HepG2 (cell line): ENCODE measurements at regions of chr12 and their contacts with region 1.

Region 1: DNA sequence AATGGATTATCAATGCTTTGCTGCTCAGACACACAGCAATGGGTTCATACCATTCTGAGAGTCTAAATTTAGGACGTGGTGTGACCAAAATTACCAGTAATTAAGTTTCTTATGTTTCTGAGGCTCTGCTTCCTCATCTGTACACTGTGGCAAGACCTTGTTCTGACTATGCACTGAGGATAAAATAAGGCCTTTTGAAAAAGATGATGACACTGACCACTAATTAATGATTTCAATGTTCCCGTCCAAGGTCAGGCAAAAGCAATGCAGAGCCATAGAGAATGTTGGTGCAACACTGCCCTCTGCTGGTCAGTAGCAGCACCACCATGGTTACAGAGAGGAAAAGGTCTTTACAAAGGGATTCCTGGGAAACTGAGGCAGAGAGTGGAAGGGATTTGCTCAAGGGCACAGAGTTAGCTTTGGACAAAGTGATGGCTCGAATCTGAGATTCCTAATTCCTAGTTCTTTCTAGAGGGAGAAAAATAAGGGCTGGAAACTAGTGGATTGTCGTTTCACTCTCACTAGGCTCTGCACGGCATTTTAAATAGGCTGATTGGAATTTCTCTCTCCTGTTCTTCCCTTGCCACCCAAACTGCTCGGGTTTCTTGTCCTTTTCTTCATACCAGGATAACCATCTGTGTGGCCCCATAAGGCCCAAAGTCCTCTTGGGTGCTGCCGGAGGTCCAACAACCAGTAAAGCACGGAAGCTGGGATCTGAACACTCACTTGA is 22.3 kb upstream of the P2RX7 start:
- DNase-seq: peak; percentile 60
- ATAC-seq: peak; percentile 69
- H3K4me3 ChIP-seq: no peak overlapping the region
- H3K27ac ChIP-seq: no peak overlapping the region
- H3K4me1 ChIP-seq: peaks cover 20% of the 10 kb centered on the region
- H3K27me3 ChIP-seq: peaks cover 3 to 14% of the 10 kb centered on the region in 2 experiments; a peak in 3 of 5 replicates
- CTCF ChIP-seq: peak; percentile 94
- EP300 ChIP-seq: no peak
- POLR2A ChIP-seq: no peak
- RAD21 ChIP-seq: peak; percentile 72

Region 2: GRCh38 chr12:121209624-121210572 is 99.5 kb after region 1 on chr12 and contains the start of gene P2RX4:
- CTCF ChIA-PET with region 1: no interaction called
- POLR2A ChIA-PET with region 1: no interaction called
- in situ Hi-C with region 1: no loop called
- intact Hi-C with region 1: loop called (anchors 10 kb)
- DNase-seq: peak; percentile 64
- ATAC-seq: peak; percentile 97
- H3K4me3 ChIP-seq: peak within 1 kb of the TSS; percentile 76 to 87 (median 77)
- H3K27ac ChIP-seq: peak within 1 kb of the TSS; percentile 60
- H3K4me1 ChIP-seq: peaks cover 23% of the 10 kb centered on the region
- H3K27me3 ChIP-seq: no peaks in the 10 kb centered on the region
- CTCF ChIP-seq: peak; percentile 81
- EP300 ChIP-seq: no peak
- POLR2A ChIP-seq: peak; percentile 93 to 97
- RAD21 ChIP-seq: 0 out of 2 replicates have a peak, but pooled peaks have one; percentile 30
- total RNA-seq, gene P2RX4: 9.5 and 13.8 TPM in 2 replicates

Region 3: DNA sequence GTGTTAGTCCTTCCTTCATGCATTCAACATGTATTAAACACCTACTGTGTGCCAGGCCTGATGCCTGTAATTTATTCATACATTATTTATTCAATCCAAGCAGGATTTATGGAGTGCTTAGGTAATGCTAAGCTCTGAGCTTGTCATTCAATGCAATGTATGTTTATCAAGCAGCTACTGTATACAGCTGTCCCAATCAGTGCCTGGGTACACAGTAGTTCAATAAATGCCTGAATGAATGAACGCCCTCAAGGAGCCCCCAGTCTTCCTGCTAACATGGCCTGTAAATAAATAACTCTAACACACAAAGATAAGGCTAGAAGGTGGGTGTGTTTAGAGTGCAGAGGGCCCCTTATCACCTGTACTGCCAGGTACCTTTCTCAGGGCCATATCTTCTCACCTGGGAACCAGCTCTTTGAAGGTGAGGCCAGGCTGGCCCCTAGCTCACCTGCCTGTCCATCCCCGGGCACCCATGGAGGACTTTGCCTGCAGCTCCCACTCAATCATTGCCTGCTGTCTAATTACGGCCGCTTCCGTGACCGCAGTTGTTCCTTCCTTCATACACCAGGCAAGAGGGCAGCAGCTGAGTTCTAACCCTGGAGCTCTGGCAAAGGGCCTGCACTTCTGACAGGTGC is 490.4 kb after region 1 on chr12:
- CTCF ChIA-PET with region 1: no interaction called
- POLR2A ChIA-PET with region 1: no interaction called
- in situ Hi-C with region 1: no loop called
- intact Hi-C with region 1: no loop called
- DNase-seq: no peak
- ATAC-seq: peak; percentile 26; the same call in 1 of the 3 replicates
- H3K4me3 ChIP-seq: no peak overlapping the region; a peak in 1 of 6 replicates
- H3K27ac ChIP-seq: no peak overlapping the region
- H3K4me1 ChIP-seq: peaks cover 34% of the 10 kb centered on the region
- H3K27me3 ChIP-seq: no peaks in the 10 kb centered on the region; a peak in 1 of 5 replicates
- CTCF ChIP-seq: no peak
- EP300 ChIP-seq: no peak
- POLR2A ChIP-seq: no peak
- RAD21 ChIP-seq: no peak